Calu3 (cell line): ENCODE measurements at regions of chr5 and their contacts with region 1.

Region 1: DNA sequence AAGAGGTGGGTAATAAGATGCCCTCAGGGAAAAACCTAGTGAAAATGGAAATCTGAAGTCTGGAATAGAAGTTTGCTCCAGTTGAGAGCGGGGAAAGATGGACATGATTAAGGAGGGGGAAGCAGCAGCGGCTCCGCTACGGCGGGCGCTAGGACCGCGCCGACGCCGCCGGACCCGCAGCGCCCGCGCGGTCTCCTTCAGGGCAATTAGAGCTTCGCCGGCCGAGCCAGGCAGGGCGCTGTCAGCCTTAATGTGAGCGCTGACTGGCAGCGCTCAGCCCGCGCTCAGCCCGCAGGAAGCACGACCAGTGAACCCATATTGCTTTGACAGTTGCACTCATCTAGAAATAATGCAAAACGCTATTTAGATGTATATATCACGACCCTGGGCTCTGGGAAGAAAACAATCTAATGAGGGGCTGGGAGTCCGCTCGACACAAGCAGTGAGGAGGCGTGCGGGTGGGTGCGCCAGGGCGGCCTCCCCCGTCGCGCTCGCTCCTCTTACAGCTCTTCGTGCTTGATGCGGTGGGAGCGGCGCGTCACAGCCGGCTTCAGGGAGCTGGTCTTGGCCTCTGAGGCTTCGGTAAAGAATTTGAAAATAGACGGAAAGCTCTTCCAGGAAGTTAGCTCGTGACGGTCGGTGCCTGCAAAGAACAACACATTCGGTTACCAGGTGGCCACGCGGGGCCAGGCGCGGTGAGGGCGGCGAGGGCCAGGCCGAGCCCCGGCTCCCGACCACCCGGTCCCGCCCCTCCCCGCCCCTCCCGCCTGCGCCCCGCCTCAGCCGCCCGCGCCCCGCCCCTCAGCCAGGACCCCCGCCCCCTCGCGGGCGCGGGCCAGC is 37.7 kb downstream of the NR2F1 start:
- DNase-seq: peak; percentile 82
- H3K4me3 Mint-ChIP-seq: peak overlapping the region; percentile 91
- H3K27ac Mint-ChIP-seq: peak overlapping the region; percentile 45
- H3K4me1 Mint-ChIP-seq: peaks cover 8% of the 10 kb centered on the region
- H3K27me3 Mint-ChIP-seq: no peaks in the 10 kb centered on the region
- CTCF ChIP-seq: no peak

Region 2: DNA sequence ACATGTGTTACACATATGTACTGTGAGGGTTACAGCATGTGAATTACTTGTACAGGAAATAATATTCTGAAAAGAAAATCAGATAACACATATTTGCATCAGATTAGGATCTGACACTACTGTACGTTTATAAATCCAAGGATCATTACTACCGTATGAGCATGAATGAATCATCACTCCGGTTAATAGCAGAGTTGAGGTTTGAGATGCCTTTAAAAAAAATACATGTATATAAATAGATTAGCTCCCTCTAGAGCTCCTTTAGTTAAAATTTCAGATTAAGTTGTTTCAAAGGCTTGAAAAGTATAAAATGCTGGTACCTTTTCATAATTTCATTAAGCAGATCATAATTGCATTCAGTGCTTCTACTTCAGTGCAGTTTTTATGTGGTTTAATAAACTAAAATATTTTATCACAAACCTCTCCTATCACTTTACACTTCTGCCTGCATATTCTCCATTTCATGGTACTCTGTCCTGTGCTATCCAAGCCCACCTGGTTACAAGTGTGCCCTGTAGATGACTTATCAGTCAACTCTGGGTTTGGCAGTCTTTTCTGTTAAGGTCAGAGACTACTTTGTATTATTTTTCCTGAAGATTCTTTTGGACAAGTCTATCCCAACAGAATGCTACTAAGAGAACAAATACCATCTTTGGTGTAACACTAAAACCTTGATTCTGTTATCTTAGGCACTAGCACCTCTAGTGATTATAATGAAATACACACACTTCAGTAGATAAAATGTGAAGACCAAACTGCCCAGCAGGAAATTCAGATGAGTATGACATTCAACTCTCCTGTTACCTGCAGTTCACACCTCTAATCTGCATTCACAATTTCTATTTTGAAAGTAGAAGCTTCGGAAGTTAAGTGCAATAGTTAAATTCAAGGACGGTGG is 168.7 kb after region 1 on chr5:
- CTCF ChIA-PET with region 1: no interaction called
- intact Hi-C with region 1: loop called (anchors 5 kb)
- DNase-seq: no peak
- H3K4me3 Mint-ChIP-seq: no peak overlapping the region
- H3K27ac Mint-ChIP-seq: no peak overlapping the region
- H3K4me1 Mint-ChIP-seq: peaks cover 9% of the 10 kb centered on the region
- H3K27me3 Mint-ChIP-seq: no peaks in the 10 kb centered on the region
- CTCF ChIP-seq: no peak